HEK293 (cell line): ENCODE measurements at regions of chr17 and their contacts with region 1.

Region 1: GRCh38 chr17:76278952-76279741 is 14.0 kb downstream of the UBALD2 start:
- H3K4me3 ChIP-seq: no peak overlapping the region
- H3K27ac ChIP-seq: no peak overlapping the region
- H3K4me1 ChIP-seq: no peaks in the 10 kb centered on the region
- CTCF ChIP-seq: peak; percentile 91

Region 2: GRCh38 chr17:76000016-76000754 is 279.0 kb before region 1 on chr17:
- CTCF ChIA-PET with region 1: interaction called, 39 read pairs
- POLR2A ChIA-PET with region 1: no interaction called
- H3K4me3 ChIP-seq: no peak overlapping the region
- H3K27ac ChIP-seq: no peak overlapping the region
- H3K4me1 ChIP-seq: no peaks in the 10 kb centered on the region
- CTCF ChIP-seq: peak; percentile 78

Region 3: DNA sequence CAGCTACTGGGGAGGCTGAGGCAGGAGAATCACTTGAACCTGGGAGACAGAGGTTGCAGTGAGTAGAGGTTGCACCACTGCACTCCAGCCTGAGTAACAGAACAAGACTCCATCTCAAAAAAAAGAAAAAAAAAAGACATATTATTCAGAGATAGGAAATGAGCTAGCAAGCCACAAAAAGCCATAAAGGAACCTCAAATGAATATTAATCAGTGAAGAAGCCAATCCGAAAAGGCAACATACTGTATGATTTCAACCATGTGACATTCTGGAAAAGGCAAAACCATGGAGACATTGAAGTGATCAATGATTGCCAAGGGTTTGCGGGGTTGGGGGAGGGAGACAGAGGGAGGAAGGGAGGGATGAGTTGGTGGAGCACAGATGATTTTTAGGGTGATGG is 167.2 kb before region 1 on chr17:
- CTCF ChIA-PET with region 1: interaction called, 191 read pairs
- POLR2A ChIA-PET with region 1: interaction called, 3 read pairs
- H3K4me3 ChIP-seq: no peak overlapping the region
- H3K27ac ChIP-seq: no peak overlapping the region
- H3K4me1 ChIP-seq: no peaks in the 10 kb centered on the region
- CTCF ChIP-seq: no peak

Region 4: GRCh38 chr17:76153640-76154039 is 125.5 kb before region 1 on chr17:
- CTCF ChIA-PET with region 1: interaction called, 30 read pairs
- POLR2A ChIA-PET with region 1: no interaction called
- H3K4me3 ChIP-seq: no peak overlapping the region
- H3K27ac ChIP-seq: no peak overlapping the region
- H3K4me1 ChIP-seq: no peaks in the 10 kb centered on the region
- CTCF ChIP-seq: peak; percentile 16; the same call in 1 of the 2 replicates

Region 5: DNA sequence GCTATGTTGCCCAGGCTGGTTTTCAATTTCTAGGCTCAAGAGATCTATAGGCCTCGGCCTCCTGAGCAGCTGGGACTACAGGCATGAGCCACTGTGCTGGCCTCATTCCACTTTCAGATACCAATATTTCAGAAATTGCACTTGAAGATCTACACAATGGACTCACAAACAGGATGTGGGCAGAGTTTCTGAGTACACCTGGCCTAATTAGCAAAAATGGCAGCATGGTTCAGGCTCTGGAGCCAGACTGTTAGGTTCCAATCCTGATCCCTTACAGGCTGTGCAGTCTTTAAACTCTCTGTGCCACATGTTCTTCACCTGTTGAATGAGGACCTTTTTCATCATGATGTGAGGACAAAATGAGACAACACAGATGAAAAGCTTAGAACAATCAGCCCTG is 71.0 kb before region 1 on chr17:
- CTCF ChIA-PET with region 1: interaction called, 13 read pairs
- POLR2A ChIA-PET with region 1: no interaction called
- H3K4me3 ChIP-seq: no peak overlapping the region
- H3K27ac ChIP-seq: no peak overlapping the region
- H3K4me1 ChIP-seq: no peaks in the 10 kb centered on the region
- CTCF ChIP-seq: no peak

Region 6: GRCh38 chr17:76264755-76265596 is 14.2 kb before region 1 on chr17 and contains the start of gene UBALD2:
- CTCF ChIA-PET with region 1: interaction called, 52 read pairs
- POLR2A ChIA-PET with region 1: interaction called, 13 read pairs
- H3K4me3 ChIP-seq: peak within 1 kb of the TSS; percentile 89
- H3K27ac ChIP-seq: peak within 1 kb of the TSS; percentile 81
- H3K4me1 ChIP-seq: no peaks in the 10 kb centered on the region; the same call in 1 of the 2 replicates
- CTCF ChIP-seq: no peak